Left cardiac atrium (tissue), 4 donors: ENCODE measurements at regions of chr11 and their contacts with region 1.

Region 1: GRCh38 chr11:126139111-126140091 is 72.0 kb downstream of the RPUSD4 start:
- DNase-seq: no peak
- ATAC-seq: peak; percentile 32 to 33

Region 2: DNA sequence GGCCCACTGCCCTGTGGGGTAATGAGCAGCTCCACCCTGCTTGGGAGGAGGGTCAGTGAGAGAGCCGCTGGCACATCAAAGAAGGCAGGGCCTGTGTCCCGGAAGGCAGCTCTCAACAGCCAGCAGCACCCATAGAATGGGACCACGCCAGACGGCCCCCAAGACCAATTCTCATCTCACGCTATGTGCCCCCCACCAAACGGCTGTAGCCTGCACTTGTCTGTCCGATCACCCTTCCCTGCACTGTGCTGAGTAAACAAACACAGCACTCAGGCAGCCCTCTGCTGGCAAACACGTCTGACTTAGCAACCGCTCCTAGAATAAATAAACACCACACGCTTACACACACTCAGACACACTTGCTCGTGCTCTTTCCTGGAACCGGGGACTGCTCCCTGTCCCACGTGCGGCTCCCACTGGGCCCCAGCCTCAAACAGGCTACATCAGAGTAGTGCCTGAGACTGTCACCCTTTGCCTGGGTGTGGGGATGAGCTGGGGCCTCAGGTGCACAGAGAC is 23.5 kb before region 1 on chr11:
- intact Hi-C with region 1: loop called in 1 of 2 experiments (anchors 1 kb)
- DNase-seq: peak; percentile 82
- ATAC-seq: peak; percentile 48 to 73